Heart right ventricle (tissue), 16 donors: ENCODE measurements at regions of chr17 and their contacts with region 1.

Region 1: GRCh38 chr17:63082273-63082993 is 116.4 kb downstream of the TANC2 start:
- DNase-seq: no peak
- ATAC-seq: no peak
- H3K4me3 ChIP-seq: no peak overlapping the region
- H3K27ac ChIP-seq: no peak overlapping the region
- H3K4me1 ChIP-seq: no peaks in the 10 kb centered on the region
- H3K27me3 ChIP-seq: no peaks in the 10 kb centered on the region
- CTCF ChIP-seq: peak; percentile 12 to 62 (median 45)

Region 2: DNA sequence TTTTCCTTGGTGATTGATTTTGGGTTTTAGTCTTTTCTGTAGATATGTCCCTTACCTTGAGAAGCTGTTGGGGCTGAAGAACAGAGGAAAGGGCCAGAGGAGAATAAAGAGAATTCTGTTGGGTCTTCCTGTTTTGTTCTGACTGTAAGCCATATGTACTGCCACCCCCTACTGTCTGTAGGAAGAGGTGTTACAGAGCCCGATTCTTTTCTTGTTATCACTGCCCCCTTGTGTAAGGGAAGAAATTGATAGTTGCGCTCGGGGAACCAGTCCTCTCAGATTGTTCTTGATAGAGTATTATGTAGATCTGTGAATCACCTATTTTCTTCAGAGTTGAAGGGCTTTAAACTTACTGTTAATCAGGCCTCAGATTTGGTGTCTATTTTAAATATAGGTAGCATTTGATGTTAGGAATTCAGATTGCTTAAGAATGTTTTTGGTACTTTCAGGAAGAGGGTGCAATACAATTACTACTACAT is 113.9 kb before region 1 on chr17:
- intact Hi-C with region 1: no loop called
- DNase-seq: peak in 1 of 2 donors; percentile 60
- ATAC-seq: peak; percentile 44 to 83 (median 70)
- H3K4me3 ChIP-seq: peak overlapping the region in 1 of 10 donors; percentile 88
- H3K27ac ChIP-seq: no peak overlapping the region
- H3K4me1 ChIP-seq: peaks cover 3 to 25% (median 22%) of the 10 kb centered on the region in 9 donors
- H3K27me3 ChIP-seq: no peaks in the 10 kb centered on the region
- CTCF ChIP-seq: peak; percentile 55 to 96 (median 82)

Region 3: DNA sequence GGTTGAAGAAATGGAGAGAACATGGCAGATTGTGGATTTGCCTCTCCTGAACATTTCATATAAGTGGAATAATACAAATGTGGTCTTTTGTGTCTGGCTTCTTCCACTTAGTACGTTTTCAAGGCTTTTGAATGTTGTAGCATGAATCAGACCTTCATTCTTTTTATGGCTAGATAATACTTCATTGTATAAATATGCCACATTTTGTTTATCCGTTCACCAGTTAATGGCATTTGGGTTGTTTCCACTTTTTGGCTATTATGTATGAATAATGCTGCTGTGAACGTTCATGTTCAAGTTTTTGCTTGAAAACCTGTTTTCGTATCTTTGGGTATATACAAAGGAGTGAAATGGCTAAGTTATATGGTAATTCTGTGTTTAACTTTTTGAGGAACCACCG is 14.0 kb after region 1 on chr17:
- intact Hi-C with region 1: loop called in 1 of 10 experiments (anchors 2 kb)
- DNase-seq: no peak
- ATAC-seq: no peak
- H3K4me3 ChIP-seq: no peak overlapping the region
- H3K27ac ChIP-seq: no peak overlapping the region
- H3K4me1 ChIP-seq: no peaks in the 10 kb centered on the region
- H3K27me3 ChIP-seq: no peaks in the 10 kb centered on the region
- CTCF ChIP-seq: no peak

Region 4: GRCh38 chr17:63124536-63124935 is 42.1 kb after region 1 on chr17:
- intact Hi-C with region 1: no loop called
- DNase-seq: no peak
- ATAC-seq: no peak
- H3K4me3 ChIP-seq: no peak overlapping the region
- H3K27ac ChIP-seq: no peak overlapping the region
- H3K4me1 ChIP-seq: no peaks in the 10 kb centered on the region
- H3K27me3 ChIP-seq: no peaks in the 10 kb centered on the region
- CTCF ChIP-seq: no peak

Region 5: DNA sequence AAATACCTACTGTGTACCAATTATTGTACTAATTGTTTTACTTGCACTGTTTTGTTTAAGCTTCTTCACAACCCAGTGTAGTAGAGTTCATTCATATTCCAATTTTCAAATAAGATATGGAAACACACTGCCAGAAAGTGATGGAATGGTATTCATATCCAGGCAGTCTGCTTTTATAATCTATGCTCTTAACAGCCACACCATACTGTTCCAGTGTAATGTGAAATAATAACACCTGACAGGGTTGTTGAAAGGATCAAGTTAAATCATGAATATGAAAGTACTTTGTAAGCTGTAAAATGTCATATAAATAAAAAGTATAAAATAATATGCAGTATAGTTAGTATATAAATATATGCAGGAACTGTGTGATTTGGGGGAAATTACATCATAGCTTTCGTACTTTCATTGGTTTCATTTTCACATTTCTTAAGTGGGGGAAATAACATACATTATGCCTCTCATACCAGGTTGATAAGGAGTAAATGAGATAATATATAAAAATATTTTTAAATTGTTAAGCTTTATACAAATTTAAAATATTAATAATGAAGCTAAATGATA is 114.4 kb after region 1 on chr17:
- intact Hi-C with region 1: no loop called
- DNase-seq: no peak
- ATAC-seq: no peak
- H3K4me3 ChIP-seq: peak overlapping the region in 3 of 10 donors; percentile 6 to 17 (median 7)
- H3K27ac ChIP-seq: peak overlapping the region in 1 of 10 donors; percentile 28
- H3K4me1 ChIP-seq: peaks cover 0 to 10% (median 0%) of the 10 kb centered on the region in 9 donors
- H3K27me3 ChIP-seq: no peaks in the 10 kb centered on the region
- CTCF ChIP-seq: no peak